ENCODE measurements at regions of chr12 and their contacts with region 1.

Region 1: GRCh38 chr12:108570743-108571608 is 8.6 kb downstream of the ISCU start:
- DNase-seq: peak in 1 of 2 experiments; percentile 58
- ATAC-seq: peak; percentile 17 to 61; a peak in 5 of 6 replicates
- H3K4me3 ChIP-seq: no peak overlapping the region
- H3K27ac ChIP-seq: no peak overlapping the region
- H3K4me1 ChIP-seq: peaks cover 5% of the 10 kb centered on the region
- CTCF ChIP-seq: peak; percentile 53; the same call in 2 of the 3 replicates
- EP300 ChIP-seq: no peak
- POLR2A ChIP-seq: no peak
- RAD21 ChIP-seq: peak; percentile 65 to 74

Region 2: GRCh38 chr12:108505129-108505528 is 65.8 kb before region 1 on chr12:
- CTCF ChIA-PET with region 1: no interaction called
- POLR2A ChIA-PET with region 1: no interaction called
- DNase-seq: no peak
- ATAC-seq: no peak
- H3K4me3 ChIP-seq: no peak overlapping the region
- H3K27ac ChIP-seq: no peak overlapping the region
- H3K4me1 ChIP-seq: no peaks in the 10 kb centered on the region
- CTCF ChIP-seq: no peak
- EP300 ChIP-seq: no peak
- POLR2A ChIP-seq: no peak
- RAD21 ChIP-seq: no peak

Region 3: GRCh38 chr12:108583991-108584390 is 13.0 kb after region 1 on chr12:
- CTCF ChIA-PET with region 1: interaction called, 12 read pairs
- POLR2A ChIA-PET with region 1: no interaction called
- DNase-seq: no peak
- ATAC-seq: peak in 1 of 2 experiments; percentile 13; a peak in 3 of 6 replicates
- H3K4me3 ChIP-seq: no peak overlapping the region
- H3K27ac ChIP-seq: no peak overlapping the region
- H3K4me1 ChIP-seq: no peaks in the 10 kb centered on the region
- CTCF ChIP-seq: no peak
- EP300 ChIP-seq: no peak
- POLR2A ChIP-seq: no peak
- RAD21 ChIP-seq: no peak

Measured in A549 (cell line).